Sigmoid colon (tissue), 7 donors: ENCODE measurements at regions of chr10 and their contacts with region 1.

Region 1: GRCh38 chr10:32256613-32257437 is 90.1 kb downstream of the EPC1 start:
- DNase-seq: peak; percentile 74
- H3K4me3 ChIP-seq: no peak overlapping the region
- H3K27ac ChIP-seq: no peak overlapping the region
- H3K4me1 ChIP-seq: peaks cover 0 to 5% (median 2%) of the 10 kb centered on the region in 4 donors
- H3K27me3 ChIP-seq: no peaks in the 10 kb centered on the region
- CTCF ChIP-seq: peak; percentile 55 to 90 (median 84)
- EP300 ChIP-seq: no peak
- POLR2A ChIP-seq: no peak

Region 2: DNA sequence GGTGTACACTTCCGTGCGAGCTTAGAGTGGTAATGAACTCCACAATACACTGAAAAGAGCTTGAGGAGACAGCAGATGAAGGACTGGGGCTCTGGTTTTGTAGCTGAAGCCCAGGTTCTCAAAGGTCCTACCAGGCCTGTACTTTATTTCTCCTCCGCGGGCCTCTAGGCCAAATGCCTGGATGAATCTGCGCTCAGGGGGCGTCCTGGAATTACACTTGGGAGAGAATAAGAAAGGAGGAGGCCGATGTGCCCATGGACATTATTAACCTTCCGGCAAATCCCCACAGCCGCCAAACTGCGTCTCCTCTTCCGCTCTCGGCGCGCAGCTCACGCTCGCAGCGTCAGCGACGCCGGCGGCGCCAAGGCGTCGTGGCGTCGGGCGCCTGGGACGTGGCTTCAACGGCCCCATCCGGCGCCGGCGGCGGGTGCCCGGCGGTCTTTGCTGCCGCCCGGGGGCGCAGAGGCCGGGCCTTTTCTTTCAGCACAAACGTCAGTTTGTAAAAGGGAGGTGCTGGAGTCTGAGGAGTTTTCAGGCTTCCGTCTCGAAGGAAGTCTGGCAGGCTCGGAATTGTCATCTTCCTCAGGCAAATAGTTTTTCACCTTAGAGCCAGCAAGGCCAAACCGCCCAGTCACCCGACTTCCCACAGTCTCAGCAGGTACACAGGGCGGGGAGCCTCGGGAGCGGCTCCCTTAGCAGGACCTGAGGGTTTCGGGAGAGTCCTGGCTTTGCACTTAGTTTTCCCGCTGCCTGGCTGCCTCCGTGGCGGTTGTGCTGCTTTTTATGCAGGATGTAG is 189.1 kb after region 1 on chr10 and contains the start of gene CCDC7:
- intact Hi-C with region 1: loop called (anchors 5 kb)
- DNase-seq: peak; percentile 91
- H3K4me3 ChIP-seq: peak within 1 kb of the TSS; percentile 60 to 73 (median 61)
- H3K27ac ChIP-seq: peak within 1 kb of the TSS; percentile 91 to 97 (median 94)
- H3K4me1 ChIP-seq: peaks cover 0 to 20% (median 10%) of the 10 kb centered on the region in 4 donors
- H3K27me3 ChIP-seq: no peaks in the 10 kb centered on the region
- CTCF ChIP-seq: peak in 2 of 4 experiments; percentile 23 to 46
- EP300 ChIP-seq: no peak
- POLR2A ChIP-seq: peak; percentile 19 to 48
- total RNA-seq, gene CCDC7: 42.9 to 84.9 (median 50.5) TPM